MCF 10A (cell line): ENCODE measurements at regions of chr2 and their contacts with region 1.

Region 1: DNA sequence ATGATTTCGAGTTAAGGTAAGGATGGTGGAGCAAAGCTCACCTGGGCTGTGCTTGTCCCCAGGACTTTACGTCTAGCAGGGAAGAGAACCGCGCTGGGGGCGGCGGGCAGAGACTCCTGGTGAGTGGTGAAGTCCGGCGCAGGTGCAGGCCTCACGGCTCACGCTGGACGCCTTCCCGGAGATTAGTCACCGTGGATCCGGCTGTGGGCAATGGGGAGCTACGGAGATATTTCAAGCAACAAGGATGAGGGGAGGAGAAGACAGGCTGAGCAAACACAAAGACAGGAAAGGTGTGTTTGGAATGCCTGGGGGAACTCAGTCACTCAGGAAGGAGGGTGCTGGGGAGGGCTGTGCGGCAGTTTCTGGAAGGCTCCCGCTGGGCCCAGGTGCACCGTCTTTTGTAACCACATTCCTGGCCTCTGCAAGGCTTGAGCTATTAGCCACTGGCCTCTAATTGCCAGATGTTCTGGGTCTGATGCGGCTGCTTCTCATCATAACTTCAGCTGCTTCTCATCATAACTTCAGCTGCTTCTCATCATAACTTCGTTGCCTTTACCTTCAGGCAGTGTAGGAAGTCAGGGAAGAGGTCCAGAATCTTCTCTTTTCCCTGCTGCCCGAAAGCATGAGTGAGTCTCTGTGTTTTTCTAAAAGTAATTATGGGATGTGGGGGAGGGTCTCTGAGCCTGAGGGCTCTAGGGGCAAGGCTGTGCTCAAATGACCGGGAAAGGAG is 118.9 kb downstream of the PXDN start:
- DNase-seq: peak; percentile 99
- H3K4me3 Mint-ChIP-seq: peak overlapping the region; percentile 65
- H3K27ac Mint-ChIP-seq: peak overlapping the region; percentile 81
- H3K4me1 Mint-ChIP-seq: peaks cover 26% of the 10 kb centered on the region
- H3K27me3 Mint-ChIP-seq: no peaks in the 10 kb centered on the region
- CTCF ChIP-seq: no peak

Region 2: DNA sequence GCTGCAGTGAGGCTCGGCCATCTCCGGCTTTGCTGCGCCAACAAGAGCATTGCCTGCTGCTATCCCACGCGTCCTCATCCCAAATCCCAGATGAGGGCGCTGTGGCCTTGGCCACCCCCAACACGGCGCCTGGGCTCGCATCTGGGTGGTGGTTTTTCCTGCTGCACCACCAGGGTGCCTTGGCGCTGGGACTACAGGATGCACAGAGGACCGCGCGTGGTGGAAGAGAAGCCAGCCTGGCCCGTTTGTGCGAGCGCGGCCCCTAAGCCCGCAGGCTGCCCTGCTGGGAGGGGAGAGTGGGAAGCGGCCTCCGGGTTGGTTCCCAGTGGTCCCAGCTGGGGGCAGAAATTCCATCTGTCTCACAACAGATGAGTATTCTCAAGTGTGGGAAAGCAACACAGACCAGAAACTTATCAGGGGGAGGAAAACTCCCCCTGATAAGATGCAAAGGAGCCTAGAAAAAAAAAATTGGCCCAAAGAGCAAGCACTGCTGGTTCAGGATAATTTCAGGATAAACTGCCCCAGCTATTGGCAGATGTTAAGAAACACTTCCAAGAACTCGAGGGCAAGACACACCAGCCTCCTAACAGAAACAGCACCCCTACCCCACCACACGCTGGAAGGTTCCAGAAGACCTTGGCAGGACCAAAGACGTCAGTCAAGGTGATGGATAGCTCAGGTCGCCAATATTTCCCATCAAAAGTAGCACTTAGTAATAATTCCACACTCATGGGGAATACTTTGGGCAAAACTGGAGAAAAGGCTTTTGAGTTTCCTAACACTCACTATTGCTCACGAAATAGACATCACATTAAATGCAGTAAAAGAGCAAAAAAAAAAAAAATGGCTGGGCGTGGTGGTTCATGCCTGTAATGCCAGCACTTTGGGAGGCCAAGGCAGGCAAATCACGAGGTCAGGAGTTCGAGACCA is 33.1 kb before region 1 on chr2:
- CTCF ChIA-PET with region 1: interaction called, 4 read pairs
- POLR2A ChIA-PET with region 1: interaction called, 12 read pairs
- intact Hi-C with region 1: no loop called
- DNase-seq: peak; percentile 45
- H3K4me3 Mint-ChIP-seq: no peak overlapping the region
- H3K27ac Mint-ChIP-seq: no peak overlapping the region
- H3K4me1 Mint-ChIP-seq: peaks cover 15% of the 10 kb centered on the region
- H3K27me3 Mint-ChIP-seq: no peaks in the 10 kb centered on the region
- CTCF ChIP-seq: no peak

Region 3: GRCh38 chr2:1613731-1614354 is 11.5 kb before region 1 on chr2:
- CTCF ChIA-PET with region 1: interaction called, 5 read pairs
- POLR2A ChIA-PET with region 1: interaction called, 17 read pairs
- intact Hi-C with region 1: no loop called
- DNase-seq: peak; percentile 86
- H3K4me3 Mint-ChIP-seq: peak overlapping the region; percentile 22
- H3K27ac Mint-ChIP-seq: peak overlapping the region; percentile 63
- H3K4me1 Mint-ChIP-seq: peaks cover 25% of the 10 kb centered on the region
- H3K27me3 Mint-ChIP-seq: no peaks in the 10 kb centered on the region
- CTCF ChIP-seq: no peak

Region 4: GRCh38 chr2:1742681-1743395 is 117.5 kb after region 1 on chr2:
- CTCF ChIA-PET with region 1: interaction called, 5 read pairs
- POLR2A ChIA-PET with region 1: interaction called, 3 read pairs
- intact Hi-C with region 1: loop called (anchors 2 kb)
- DNase-seq: peak; percentile 91
- H3K4me3 Mint-ChIP-seq: peak overlapping the region; percentile 79
- H3K27ac Mint-ChIP-seq: peak overlapping the region; percentile 90
- H3K4me1 Mint-ChIP-seq: peaks cover 7% of the 10 kb centered on the region
- H3K27me3 Mint-ChIP-seq: no peaks in the 10 kb centered on the region
- CTCF ChIP-seq: peak; percentile 66

Region 5: DNA sequence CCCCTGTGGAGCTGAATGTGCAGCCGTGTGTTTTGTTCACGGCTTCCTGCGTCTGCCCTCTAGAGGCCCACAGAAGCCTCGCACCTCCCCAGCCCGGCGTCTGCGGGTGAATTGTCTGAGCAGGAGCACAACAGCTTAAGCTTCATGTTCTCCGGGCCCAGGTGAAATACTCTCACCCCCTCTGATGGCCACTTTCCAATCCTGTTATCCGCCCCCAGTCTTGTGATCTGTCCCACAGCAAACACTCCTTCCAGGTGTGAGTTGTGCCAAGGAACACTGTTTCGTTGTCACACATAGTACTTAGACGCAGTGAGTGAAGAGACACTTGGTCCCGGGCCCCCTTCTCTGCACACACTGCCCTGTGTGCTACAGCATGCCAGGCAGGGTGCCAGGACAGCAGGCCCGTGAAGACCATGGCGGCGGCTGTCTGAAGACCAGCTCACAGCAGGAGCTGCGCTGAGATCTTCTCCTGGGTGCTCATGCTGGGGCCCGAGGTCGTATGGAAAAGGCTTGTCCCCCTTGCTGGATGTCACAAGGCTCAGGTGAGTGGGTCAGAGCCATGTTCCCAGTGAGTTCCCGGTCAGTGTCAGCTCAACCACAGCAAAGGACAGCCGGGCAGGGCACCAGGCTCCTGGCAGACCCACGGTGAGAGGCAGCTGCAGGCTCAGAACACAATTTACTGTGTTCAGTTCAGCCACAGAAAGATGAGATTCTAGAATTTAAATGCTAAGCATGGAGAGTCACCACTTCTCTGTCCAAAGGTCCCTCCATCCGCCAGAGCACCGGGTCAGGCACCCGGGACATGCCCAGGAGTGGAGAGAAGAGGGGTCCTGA is 125.8 kb after region 1 on chr2:
- CTCF ChIA-PET with region 1: interaction called, 15 read pairs
- POLR2A ChIA-PET with region 1: interaction called, 3 read pairs
- intact Hi-C with region 1: no loop called
- DNase-seq: peak; percentile 74
- H3K4me3 Mint-ChIP-seq: no peak overlapping the region
- H3K27ac Mint-ChIP-seq: no peak overlapping the region
- H3K4me1 Mint-ChIP-seq: peaks cover 13% of the 10 kb centered on the region
- H3K27me3 Mint-ChIP-seq: no peaks in the 10 kb centered on the region
- CTCF ChIP-seq: peak; percentile 88